PC-9 (cell line): ENCODE measurements at regions of chr9 and their contacts with region 1.

Region 1: DNA sequence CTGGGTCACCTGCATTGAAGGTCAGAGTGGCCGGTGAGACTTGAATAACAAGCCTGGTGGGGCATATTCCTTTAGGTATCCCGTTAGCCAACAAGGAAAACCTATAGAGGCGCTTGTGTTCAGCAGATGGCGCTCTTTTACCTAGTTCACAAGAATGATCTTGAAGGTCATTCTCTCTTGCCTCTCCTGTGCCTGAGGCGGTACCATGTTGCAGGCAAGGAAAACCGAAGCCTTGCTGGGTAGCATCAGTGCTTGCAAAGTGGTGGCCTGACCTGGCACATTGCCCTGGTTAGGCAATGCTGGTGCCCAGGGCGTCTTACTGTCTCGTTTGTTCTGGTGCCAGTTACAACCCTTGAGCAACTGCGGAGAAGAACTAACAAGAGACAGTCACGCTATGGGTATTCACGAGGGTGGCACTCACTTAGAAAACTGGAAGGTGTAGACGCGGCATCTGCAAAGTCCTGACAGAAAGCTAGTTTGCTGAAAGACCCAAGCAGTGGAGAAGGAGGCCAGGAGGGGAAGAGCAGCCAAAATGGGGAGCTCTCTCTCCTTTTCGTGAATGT is 56.7 kb downstream of the AOPEP start:
- DNase-seq: peak; percentile 98 to 99
- H3K4me3 ChIP-seq: no peak overlapping the region
- H3K27ac ChIP-seq: peak overlapping the region; percentile 78
- H3K4me1 ChIP-seq: peaks cover 30% of the 10 kb centered on the region
- H3K27me3 ChIP-seq: no peaks in the 10 kb centered on the region
- CTCF ChIP-seq: peak; percentile 84

Region 2: GRCh38 chr9:94672811-94673487 is 110.2 kb before region 1 on chr9:
- CTCF ChIA-PET with region 1: interaction called, 9 read pairs
- POLR2A ChIA-PET with region 1: no interaction called
- intact Hi-C with region 1: loop called (anchors 1 kb)
- DNase-seq: peak in 1 of 2 experiments; percentile 85
- H3K4me3 ChIP-seq: no peak overlapping the region; the same call in 1 of the 2 replicates
- H3K27ac ChIP-seq: peak overlapping the region; percentile 61
- H3K4me1 ChIP-seq: peaks cover 19% of the 10 kb centered on the region
- H3K27me3 ChIP-seq: no peaks in the 10 kb centered on the region
- CTCF ChIP-seq: no peak

Region 3: DNA sequence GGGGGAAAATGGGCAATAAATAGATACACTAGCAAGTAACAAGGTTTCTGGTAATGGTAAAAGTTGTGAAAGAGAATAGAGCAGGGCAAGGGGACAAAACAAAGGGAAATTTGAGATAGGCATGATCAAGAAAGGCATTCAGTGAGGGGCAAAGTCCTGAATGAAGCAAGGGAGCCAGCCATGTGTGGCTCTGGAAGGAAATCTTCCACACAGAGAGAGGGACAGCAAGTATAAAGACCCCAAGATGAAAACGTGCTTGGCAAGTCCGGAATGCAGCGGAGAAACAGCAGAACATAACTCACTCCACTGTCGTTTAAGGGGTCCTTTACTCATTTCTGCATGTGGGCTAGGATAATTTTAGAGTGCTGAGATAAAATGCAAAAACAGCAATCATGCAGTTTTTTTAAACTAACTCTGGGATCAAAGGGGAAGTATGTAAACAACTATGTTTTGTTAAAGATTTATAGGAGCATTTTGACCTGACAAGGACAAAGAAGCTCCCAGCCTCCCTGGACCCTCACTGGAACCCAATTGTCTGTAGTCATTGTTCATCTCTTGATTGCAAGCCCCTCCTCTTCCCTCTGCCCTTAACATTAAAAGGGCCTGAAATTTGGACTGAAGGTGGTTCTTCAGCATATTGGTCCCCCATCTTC is 79.6 kb before region 1 on chr9:
- CTCF ChIA-PET with region 1: no interaction called
- POLR2A ChIA-PET with region 1: no interaction called
- intact Hi-C with region 1: no loop called
- DNase-seq: no peak
- H3K4me3 ChIP-seq: no peak overlapping the region
- H3K27ac ChIP-seq: no peak overlapping the region
- H3K4me1 ChIP-seq: no peaks in the 10 kb centered on the region
- H3K27me3 ChIP-seq: no peaks in the 10 kb centered on the region
- CTCF ChIP-seq: no peak

Region 4: GRCh38 chr9:94805585-94805984 is 22.4 kb after region 1 on chr9:
- CTCF ChIA-PET with region 1: interaction called, 5 read pairs
- POLR2A ChIA-PET with region 1: no interaction called
- intact Hi-C with region 1: loop called (anchors 1 kb)
- DNase-seq: peak; percentile 69 to 100
- H3K4me3 ChIP-seq: peak overlapping the region; percentile 0; the same call in 1 of the 2 replicates
- H3K27ac ChIP-seq: peak overlapping the region; percentile 94
- H3K4me1 ChIP-seq: peaks cover 54% of the 10 kb centered on the region
- H3K27me3 ChIP-seq: no peaks in the 10 kb centered on the region
- CTCF ChIP-seq: no peak

Region 5: GRCh38 chr9:94839398-94839797 is 56.2 kb after region 1 on chr9:
- CTCF ChIA-PET with region 1: no interaction called
- POLR2A ChIA-PET with region 1: no interaction called
- intact Hi-C with region 1: no loop called
- DNase-seq: no peak
- H3K4me3 ChIP-seq: no peak overlapping the region
- H3K27ac ChIP-seq: no peak overlapping the region
- H3K4me1 ChIP-seq: no peaks in the 10 kb centered on the region
- H3K27me3 ChIP-seq: no peaks in the 10 kb centered on the region
- CTCF ChIP-seq: no peak

Region 6: GRCh38 chr9:94950579-94951323 is 167.6 kb after region 1 on chr9:
- CTCF ChIA-PET with region 1: no interaction called
- POLR2A ChIA-PET with region 1: no interaction called
- intact Hi-C with region 1: loop called (anchors 1 kb)
- DNase-seq: peak; percentile 89 to 100
- H3K4me3 ChIP-seq: peak overlapping the region; percentile 5; the same call in 1 of the 2 replicates
- H3K27ac ChIP-seq: peak overlapping the region; percentile 91
- H3K4me1 ChIP-seq: peaks cover 85% of the 10 kb centered on the region
- H3K27me3 ChIP-seq: no peaks in the 10 kb centered on the region
- CTCF ChIP-seq: no peak

Region 7: DNA sequence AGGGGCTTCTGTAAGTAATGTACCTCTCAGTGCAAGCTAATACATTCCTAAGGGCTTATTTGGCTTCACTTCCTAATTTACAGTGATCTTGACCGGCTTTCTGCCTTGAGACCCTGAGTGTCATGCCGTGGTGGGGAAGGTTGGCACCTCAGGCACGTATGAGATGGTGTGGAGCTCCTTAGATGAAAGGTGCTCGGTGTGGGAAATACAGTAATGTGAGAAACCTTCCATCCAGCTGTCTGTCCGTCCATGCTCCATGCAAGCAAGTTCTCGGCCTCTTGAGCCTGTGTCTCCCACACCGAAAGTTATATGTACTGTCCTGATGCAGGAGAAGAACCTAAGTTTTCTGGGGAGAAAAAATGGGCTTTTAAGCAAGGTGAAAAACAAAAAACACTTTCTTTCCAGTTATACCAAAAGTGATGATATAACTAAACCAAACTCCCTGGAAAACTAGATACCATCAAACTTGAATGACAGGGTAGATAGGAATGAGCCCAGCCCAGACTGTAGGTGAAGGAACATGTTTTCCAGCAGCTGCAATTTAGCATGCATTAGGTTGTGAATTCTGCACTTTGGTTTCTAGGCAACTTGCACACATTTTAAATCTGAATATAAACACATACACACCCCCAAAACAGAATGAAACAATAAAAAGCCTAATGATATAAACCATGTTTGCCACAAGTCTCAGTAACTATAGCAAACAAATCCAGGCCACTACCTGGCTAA is 254.8 kb after region 1 on chr9:
- CTCF ChIA-PET with region 1: no interaction called
- POLR2A ChIA-PET with region 1: no interaction called
- intact Hi-C with region 1: loop called (anchors 5 kb)
- DNase-seq: peak; percentile 44 to 67
- H3K4me3 ChIP-seq: no peak overlapping the region
- H3K27ac ChIP-seq: peak overlapping the region; percentile 11; the same call in 1 of the 2 replicates
- H3K4me1 ChIP-seq: peaks cover 27% of the 10 kb centered on the region
- H3K27me3 ChIP-seq: no peaks in the 10 kb centered on the region
- CTCF ChIP-seq: no peak